ENCODE measurements at regions of chr5 and their contacts with region 1.

Region 1: GRCh38 chr5:80184235-80185023 is 71.4 kb downstream of the SERINC5 start:
- DNase-seq: no peak

Region 2: DNA sequence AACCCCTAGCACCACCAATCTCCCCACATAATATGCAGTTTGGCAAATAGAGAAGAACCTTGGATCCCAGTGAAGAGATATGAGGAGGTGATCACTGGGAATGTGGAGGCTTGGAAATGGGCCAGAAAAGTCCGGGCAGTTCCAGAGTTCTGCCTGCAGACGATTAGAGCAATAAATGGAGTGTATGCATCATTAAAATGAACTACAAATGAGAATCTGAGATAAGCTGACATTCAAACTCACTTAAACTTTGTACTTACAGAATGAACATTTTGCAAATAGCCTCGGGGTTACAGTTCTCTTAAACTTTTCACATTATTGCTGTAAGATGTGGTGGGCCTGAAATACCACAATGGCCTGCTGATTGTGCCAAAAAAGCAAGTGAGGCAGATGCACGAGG is 1512.8 kb before region 1 on chr5:
- intact Hi-C with region 1: loop called in 1 of 2 experiments (anchors 5 kb)
- DNase-seq: no peak

Region 3: GRCh38 chr5:80165452-80165851 is 19.0 kb before region 1 on chr5:
- intact Hi-C with region 1: loop called in 1 of 2 experiments (anchors 1 kb)
- DNase-seq: no peak

Region 4: DNA sequence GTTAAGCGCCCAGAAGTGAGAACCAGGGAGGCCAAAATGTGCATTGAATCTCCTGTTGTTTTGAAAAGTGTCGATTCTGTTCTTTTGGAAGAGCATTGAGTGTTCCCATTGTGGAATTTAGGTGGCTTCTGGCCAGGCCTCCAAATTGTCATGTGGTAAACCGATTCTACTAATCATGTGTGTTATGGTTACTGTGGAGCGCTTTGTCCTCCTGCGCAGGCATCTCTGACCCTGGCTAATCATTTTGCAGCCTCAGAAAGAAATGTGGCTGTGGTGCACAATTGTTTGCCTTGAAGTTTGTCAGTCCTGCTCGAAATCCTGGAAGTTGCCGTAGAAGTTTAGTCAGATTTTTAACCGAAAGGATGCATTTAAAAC is 897.0 kb after region 1 on chr5:
- intact Hi-C with region 1: loop called in 1 of 2 experiments (anchors 5 kb)
- DNase-seq: no peak

Region 5: DNA sequence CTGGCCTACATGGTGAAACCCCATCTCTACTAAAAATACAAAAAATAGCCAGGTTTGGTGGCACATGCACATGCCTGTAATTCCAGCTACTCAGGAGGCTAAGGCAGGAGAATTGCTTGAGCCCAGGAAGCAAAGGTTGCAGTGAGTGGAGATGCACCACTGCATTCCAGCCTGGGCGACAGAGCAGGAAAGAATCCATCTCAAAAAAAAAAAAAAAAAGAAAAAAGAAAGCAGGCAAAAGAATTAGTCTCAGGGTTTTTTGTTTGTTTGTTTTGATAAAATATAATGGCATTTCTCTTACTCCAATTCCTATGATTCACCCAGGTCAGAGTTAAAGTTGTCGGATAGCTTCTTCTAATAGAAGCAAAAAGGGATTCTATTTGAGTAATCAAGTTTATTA is 1720.4 kb after region 1 on chr5:
- intact Hi-C with region 1: loop called in 1 of 2 experiments (anchors 5 kb)
- DNase-seq: no peak

Measured in posterior vena cava (tissue), 2 donors.